ENCODE measurements at regions of chr16 and their contacts with region 1.

Region 1: GRCh38 chr16:31767267-31767666 is 106.3 kb upstream of the ZNF267 start:
- DNase-seq: no peak
- ATAC-seq: no peak
- H3K4me3 ChIP-seq: no peak overlapping the region
- H3K27ac ChIP-seq: no peak overlapping the region
- H3K4me1 ChIP-seq: no peaks in the 10 kb centered on the region
- H3K27me3 ChIP-seq: no peaks in the 10 kb centered on the region
- CTCF ChIP-seq: no peak

Region 2: DNA sequence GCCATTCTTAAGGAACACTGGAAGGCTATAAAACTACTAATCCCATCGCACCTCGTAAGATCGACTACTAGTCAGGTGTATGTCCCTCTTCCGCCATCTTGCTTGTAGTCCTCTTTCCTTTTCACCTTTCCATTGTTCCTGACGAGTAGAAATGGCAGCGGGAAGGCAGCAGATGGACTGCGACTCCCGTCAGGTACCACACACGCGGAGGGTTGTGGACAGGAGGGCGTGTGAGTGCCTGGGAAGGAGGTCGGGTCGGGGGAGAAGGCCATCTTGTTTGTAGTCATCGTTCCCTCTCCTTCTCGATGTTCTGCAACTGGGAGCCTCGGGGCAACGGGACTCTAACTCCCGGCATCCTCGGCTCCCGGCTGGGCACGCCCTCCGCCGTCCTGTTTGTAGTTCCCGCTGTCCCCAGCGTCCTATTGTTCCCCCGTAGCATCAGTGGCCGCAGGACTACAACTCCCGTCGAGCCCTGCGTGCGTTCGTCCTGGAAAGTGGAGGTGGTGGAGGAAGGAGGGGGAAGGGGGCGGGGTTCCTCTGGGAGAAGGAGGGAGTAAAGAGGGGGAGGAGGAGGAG is 844.2 kb before region 1 on chr16:
- CTCF ChIA-PET with region 1: no interaction called
- POLR2A ChIA-PET with region 1: no interaction called
- intact Hi-C with region 1: no loop called
- DNase-seq: peak; percentile 98
- ATAC-seq: peak; percentile 81
- H3K4me3 ChIP-seq: peak overlapping the region; percentile 86
- H3K27ac ChIP-seq: peak overlapping the region; percentile 78
- H3K4me1 ChIP-seq: peaks cover 7% of the 10 kb centered on the region
- H3K27me3 ChIP-seq: no peaks in the 10 kb centered on the region
- CTCF ChIP-seq: no peak

Region 3: DNA sequence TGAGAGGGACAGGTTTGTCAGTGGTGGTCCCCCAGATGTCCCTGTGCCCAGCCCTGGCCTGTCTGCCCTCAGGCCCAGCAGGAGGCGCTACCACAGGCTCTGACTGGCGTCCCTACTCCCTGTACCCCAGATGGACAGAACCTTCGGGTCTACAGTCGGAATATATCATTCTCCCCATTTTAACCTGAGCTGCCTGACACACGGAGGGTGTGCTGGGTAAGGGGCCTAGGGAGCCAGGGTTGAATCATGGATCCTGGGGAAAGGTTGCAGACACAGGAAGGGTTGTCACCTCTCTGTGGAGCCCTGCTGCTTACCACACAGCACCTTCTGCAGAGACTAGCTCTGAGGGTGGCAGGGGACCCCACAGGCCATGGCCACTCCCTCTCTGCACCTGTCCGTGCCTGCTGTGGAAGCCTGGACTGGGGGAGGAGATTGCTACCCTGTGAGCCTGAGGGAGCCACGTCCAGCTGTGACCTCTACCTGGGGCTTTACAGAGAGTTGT is 55.9 kb before region 1 on chr16:
- CTCF ChIA-PET with region 1: no interaction called
- POLR2A ChIA-PET with region 1: no interaction called
- intact Hi-C with region 1: no loop called
- DNase-seq: no peak
- ATAC-seq: no peak
- H3K4me3 ChIP-seq: no peak overlapping the region
- H3K27ac ChIP-seq: no peak overlapping the region
- H3K4me1 ChIP-seq: peaks cover 10% of the 10 kb centered on the region; the same call in 1 of the 2 replicates
- H3K27me3 ChIP-seq: no peaks in the 10 kb centered on the region
- CTCF ChIP-seq: peak; percentile 28; the same call in 1 of the 2 replicates

Region 4: GRCh38 chr16:31727553-31727952 is 39.7 kb before region 1 on chr16:
- CTCF ChIA-PET with region 1: no interaction called
- POLR2A ChIA-PET with region 1: no interaction called
- intact Hi-C with region 1: no loop called
- DNase-seq: no peak
- ATAC-seq: no peak
- H3K4me3 ChIP-seq: no peak overlapping the region
- H3K27ac ChIP-seq: no peak overlapping the region
- H3K4me1 ChIP-seq: no peaks in the 10 kb centered on the region
- H3K27me3 ChIP-seq: no peaks in the 10 kb centered on the region
- CTCF ChIP-seq: no peak

Region 5: DNA sequence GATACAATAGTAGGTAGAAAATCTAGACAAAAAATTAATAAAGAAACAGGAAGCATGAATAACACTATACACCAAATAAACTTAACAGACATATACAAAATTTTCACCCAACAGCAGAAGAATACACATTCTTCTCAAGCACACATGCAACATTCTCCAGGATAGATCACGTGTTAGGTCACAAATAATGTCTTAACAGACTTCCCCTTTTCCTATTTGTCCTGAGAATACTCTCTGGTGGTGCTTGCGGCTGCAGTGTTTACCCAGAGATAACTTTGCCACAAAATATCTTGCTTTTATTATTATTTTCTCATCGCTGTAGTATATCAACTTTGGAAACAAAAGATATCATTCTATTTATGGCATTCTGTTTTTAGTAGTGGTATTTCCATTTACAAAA is 65.8 kb after region 1 on chr16:
- CTCF ChIA-PET with region 1: no interaction called
- POLR2A ChIA-PET with region 1: no interaction called
- intact Hi-C with region 1: loop called (anchors 10 kb)
- DNase-seq: no peak
- ATAC-seq: no peak
- H3K4me3 ChIP-seq: no peak overlapping the region
- H3K27ac ChIP-seq: no peak overlapping the region
- H3K4me1 ChIP-seq: no peaks in the 10 kb centered on the region
- H3K27me3 ChIP-seq: no peaks in the 10 kb centered on the region
- CTCF ChIP-seq: no peak